K562 (cell line): ENCODE measurements at regions of chr11 and their contacts with region 1.

Region 1: GRCh38 chr11:108008656-108009496 is at the start of gene CUL5:
- DNase-seq: peak; percentile 89 to 95 (median 91)
- ATAC-seq: peak; percentile 83
- H3K4me3 ChIP-seq: peak within 1 kb of the TSS; percentile 90
- H3K27ac ChIP-seq: peak within 1 kb of the TSS; percentile 99
- H3K4me1 ChIP-seq: peaks cover 12 to 20% of the 10 kb centered on the region in 2 experiments; a peak in 3 of 5 replicates
- H3K27me3 ChIP-seq: no peaks in the 10 kb centered on the region
- CTCF ChIP-seq: peak; percentile 87 to 88 (median 88)
- EP300 ChIP-seq: 0 out of 2 replicates have a peak, but pooled peaks have one; percentile 11
- POLR2A ChIP-seq: peak; percentile 94
- RAD21 ChIP-seq: peak; percentile 62 to 80
- polyA plus RNA-seq, gene CUL5: 14.3 to 16.3 TPM

Region 2: DNA sequence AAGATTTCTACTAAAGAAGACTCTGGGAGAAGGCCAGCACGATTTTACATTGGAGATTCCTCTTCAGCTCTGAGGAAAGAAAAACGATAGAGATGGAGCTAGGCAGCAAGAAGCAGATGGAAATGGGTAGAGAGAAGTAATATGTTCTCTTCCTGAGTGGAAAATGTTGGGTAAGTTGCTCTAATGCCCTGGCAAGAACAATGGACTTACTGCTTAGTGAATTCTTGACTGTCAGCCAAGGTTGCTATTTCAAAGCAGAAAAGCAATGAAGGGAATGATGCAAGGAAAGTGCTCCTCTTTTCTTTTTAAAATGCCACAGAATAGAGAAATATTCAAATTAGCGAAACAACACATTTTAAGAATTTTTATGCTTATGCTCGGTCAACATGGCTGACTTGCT is 512.9 kb before region 1 on chr11:
- CTCF ChIA-PET with region 1: no interaction called
- POLR2A ChIA-PET with region 1: no interaction called
- in situ Hi-C with region 1: no loop called
- intact Hi-C with region 1: no loop called
- DNase-seq: no peak
- ATAC-seq: no peak
- H3K4me3 ChIP-seq: no peak overlapping the region
- H3K27ac ChIP-seq: no peak overlapping the region
- H3K4me1 ChIP-seq: no peaks in the 10 kb centered on the region
- H3K27me3 ChIP-seq: no peaks in the 10 kb centered on the region; a peak in 1 of 5 replicates
- CTCF ChIP-seq: no peak
- EP300 ChIP-seq: no peak
- POLR2A ChIP-seq: no peak
- RAD21 ChIP-seq: no peak

Region 3: GRCh38 chr11:108025387-108026080 is 16.7 kb after region 1 on chr11:
- CTCF ChIA-PET with region 1: interaction called, 3 read pairs
- POLR2A ChIA-PET with region 1: interaction called, 4 read pairs
- in situ Hi-C with region 1: no loop called
- intact Hi-C with region 1: loop called (anchors 2 kb)
- DNase-seq: no peak
- ATAC-seq: peak; percentile 17
- H3K4me3 ChIP-seq: no peak overlapping the region
- H3K27ac ChIP-seq: no peak overlapping the region; the same call in 2 of the 3 replicates
- H3K4me1 ChIP-seq: peaks cover 4 to 18% of the 10 kb centered on the region in 2 experiments; a peak in 4 of 5 replicates
- H3K27me3 ChIP-seq: no peaks in the 10 kb centered on the region
- CTCF ChIP-seq: no peak
- EP300 ChIP-seq: no peak
- POLR2A ChIP-seq: no peak
- RAD21 ChIP-seq: no peak

Region 4: GRCh38 chr11:108069947-108070346 is 61.1 kb after region 1 on chr11:
- CTCF ChIA-PET with region 1: no interaction called
- POLR2A ChIA-PET with region 1: no interaction called
- in situ Hi-C with region 1: no loop called
- intact Hi-C with region 1: no loop called
- DNase-seq: no peak
- ATAC-seq: no peak
- H3K4me3 ChIP-seq: no peak overlapping the region
- H3K27ac ChIP-seq: no peak overlapping the region
- H3K4me1 ChIP-seq: no peaks in the 10 kb centered on the region
- H3K27me3 ChIP-seq: no peaks in the 10 kb centered on the region
- CTCF ChIP-seq: no peak
- EP300 ChIP-seq: no peak
- POLR2A ChIP-seq: no peak
- RAD21 ChIP-seq: no peak

Region 5: DNA sequence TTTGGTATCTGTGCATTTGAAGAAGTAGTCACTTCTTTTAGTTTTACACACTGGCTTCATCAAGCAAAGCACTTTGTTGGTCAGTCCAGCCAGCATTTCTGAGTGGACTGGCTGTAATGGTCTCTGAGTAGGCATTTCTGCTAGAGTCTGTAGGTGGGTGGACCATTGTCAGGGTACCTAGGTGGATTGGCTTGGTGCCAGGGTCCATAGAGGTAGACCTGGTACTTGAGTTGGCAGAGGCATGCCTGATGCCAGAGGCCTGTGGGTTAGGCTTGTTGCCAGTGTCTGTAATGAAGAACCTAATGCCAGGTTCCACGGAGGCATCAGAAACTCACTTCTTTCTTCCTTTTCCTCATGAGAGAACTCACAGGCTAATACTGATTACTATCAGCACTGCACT is 1255.3 kb after region 1 on chr11:
- CTCF ChIA-PET with region 1: no interaction called
- POLR2A ChIA-PET with region 1: no interaction called
- in situ Hi-C with region 1: no loop called
- intact Hi-C with region 1: no loop called
- DNase-seq: no peak
- ATAC-seq: no peak
- H3K4me3 ChIP-seq: no peak overlapping the region
- H3K27ac ChIP-seq: no peak overlapping the region
- H3K4me1 ChIP-seq: no peaks in the 10 kb centered on the region
- H3K27me3 ChIP-seq: no peaks in the 10 kb centered on the region
- CTCF ChIP-seq: no peak
- EP300 ChIP-seq: no peak
- POLR2A ChIP-seq: no peak
- RAD21 ChIP-seq: no peak